AG04450 (cell line): ENCODE measurements at regions of chr20 and their contacts with region 1.

Region 1: DNA sequence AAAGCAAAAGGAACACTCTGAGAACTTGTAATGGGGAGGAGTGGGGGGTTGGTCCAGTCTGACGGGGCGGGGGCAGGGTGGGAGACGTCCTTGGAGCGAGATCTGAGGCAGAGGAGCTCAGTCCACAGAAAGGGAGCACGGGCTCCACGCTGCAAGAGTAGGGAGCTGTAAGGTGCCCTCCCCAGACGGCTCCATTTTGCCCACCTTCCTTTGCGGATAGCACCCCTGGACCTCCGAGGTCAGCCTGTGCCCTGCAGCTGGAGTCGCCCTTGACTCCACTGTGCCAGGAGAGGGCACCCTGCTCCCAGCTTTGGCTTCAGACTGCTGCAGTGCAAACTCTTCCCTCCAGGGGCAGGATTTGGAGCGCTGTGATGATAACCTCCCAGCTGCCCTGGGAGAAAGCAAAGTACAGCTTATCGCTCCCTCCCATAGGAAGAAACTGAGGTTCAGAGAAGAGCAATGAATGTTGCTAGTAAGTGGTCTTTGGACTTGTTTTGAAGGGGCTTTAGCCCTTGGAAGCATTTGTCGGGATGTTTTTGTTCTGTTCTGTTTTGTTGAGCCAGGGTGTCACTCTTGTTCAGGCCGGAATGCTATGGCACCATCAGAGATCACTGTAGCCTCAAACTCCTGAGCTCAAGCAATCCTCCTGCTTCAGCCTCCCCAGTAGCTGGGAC is 9.5 kb upstream of the AHCY start:
- DNase-seq: peak; percentile 69
- H3K4me3 ChIP-seq: peak overlapping the region; percentile 51
- H3K27ac ChIP-seq: no peak overlapping the region
- H3K27me3 ChIP-seq: no peaks in the 10 kb centered on the region
- CTCF ChIP-seq: peak; percentile 100

Region 2: DNA sequence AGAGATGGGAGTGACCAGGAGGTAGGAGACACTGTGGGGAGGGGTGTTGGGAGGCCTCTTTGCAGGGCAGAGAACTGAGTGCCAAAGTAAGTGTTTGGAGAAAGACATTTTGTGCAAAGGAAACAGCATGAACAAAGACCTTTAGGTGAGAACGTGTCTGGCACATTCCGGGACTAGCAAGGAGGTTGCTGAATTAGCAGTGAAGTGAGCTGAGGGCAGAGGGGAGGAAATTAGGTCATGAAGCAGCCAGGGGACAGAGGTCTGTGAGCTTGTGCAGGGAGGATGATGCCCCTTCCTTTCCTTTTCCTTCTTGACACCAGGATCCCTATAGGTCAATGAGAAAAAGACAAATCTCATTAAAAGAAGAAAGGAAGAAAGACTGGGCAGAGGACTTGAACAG is 11.9 kb after region 1 on chr20:
- CTCF ChIA-PET with region 1: interaction called, 29 read pairs
- POLR2A ChIA-PET with region 1: no interaction called
- DNase-seq: no peak
- H3K4me3 ChIP-seq: no peak overlapping the region
- H3K27ac ChIP-seq: no peak overlapping the region
- H3K27me3 ChIP-seq: no peaks in the 10 kb centered on the region
- CTCF ChIP-seq: no peak

Region 3: DNA sequence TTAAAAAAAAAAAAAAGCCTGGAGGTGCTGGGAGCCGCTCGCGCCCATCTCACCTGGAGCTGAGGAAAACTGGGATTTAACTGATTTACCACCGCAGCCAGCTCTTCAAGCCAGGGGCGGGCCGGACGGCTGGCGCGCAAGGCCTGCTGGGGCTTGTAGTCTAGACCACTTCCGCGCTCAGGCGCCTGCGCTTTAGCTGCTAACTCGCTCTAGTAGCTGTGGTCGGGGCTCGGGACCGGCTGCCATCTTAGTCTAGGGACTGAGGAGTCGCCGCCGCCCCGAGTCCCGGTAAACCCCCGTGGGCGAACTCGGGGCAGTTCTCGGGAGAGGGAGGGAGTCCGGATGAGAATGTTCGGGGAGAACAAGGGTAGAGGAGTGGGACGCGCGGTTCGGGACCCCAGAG is 50.4 kb after region 1 on chr20 and contains the start of gene ITCH:
- CTCF ChIA-PET with region 1: interaction called, 20 read pairs
- POLR2A ChIA-PET with region 1: interaction called, 7 read pairs
- DNase-seq: peak; percentile 86
- H3K4me3 ChIP-seq: peak within 1 kb of the TSS; percentile 84
- H3K27ac ChIP-seq: peak within 1 kb of the TSS; percentile 81
- H3K27me3 ChIP-seq: no peaks in the 10 kb centered on the region
- CTCF ChIP-seq: no peak
- polyA plus RNA-seq, gene ITCH: 20.3 and 23.2 TPM in 2 replicates

Region 4: DNA sequence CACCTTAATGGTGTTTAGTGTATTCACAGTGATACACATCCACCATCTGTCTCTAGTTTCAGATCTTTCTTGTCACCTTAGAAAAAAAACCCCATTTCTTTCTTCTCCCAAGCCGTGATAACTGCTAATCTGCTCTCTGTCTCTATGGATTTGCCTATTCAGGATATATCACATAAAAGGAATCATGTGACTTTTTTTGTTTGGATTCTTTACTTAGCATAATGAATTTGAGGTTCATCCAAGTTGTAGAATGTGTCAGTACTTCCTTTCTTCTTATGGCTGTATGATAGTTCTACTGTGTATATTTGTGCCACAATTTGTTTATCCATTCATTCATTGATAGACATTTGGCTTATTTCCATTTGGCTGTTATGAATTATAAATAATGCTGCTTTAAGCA is 107.5 kb after region 1 on chr20:
- CTCF ChIA-PET with region 1: interaction called, 18 read pairs
- POLR2A ChIA-PET with region 1: no interaction called
- DNase-seq: no peak
- H3K4me3 ChIP-seq: no peak overlapping the region
- H3K27ac ChIP-seq: no peak overlapping the region
- H3K27me3 ChIP-seq: no peaks in the 10 kb centered on the region
- CTCF ChIP-seq: no peak

Region 5: DNA sequence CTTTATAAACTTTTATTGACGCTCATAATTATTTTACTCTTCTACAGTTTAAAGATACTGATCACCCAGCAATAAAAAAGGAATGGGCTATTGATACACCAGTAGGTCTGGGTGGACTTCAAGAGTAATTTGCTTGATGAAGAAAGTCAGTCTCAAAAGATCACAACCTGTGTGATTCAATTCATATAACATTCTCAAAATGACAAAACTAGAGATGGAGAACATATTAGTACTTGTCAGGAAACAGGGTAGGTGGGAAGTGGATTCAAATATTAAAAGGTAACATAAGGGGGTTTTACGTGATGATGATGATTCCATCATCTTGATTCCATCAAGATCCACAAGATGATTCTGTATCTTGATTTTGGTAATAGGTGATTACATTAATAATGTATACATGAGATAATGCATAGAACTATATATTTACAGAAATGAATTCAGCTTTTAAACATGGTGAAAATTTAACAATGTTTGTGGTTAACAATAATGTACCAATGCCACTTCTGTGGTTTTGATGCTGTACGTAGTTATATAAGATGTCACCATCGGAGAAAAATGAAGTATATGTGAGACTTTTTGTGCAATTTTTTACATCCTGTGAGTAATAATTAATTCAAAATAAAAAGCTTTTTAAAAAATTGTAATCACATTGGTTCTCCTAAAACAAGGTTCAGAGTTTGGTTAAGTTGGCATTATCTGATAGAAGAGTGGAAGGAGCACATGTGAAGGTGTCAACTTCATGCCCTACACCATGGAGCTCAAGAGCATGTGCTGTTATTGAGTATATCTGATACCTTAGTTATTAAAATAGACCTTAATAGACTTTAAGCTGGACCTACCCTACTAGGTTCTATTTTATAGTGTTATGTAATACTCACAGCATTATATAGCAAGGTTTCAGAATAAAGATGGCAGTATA is 137.3 kb after region 1 on chr20:
- CTCF ChIA-PET with region 1: interaction called, 14 read pairs
- POLR2A ChIA-PET with region 1: no interaction called
- DNase-seq: no peak
- H3K4me3 ChIP-seq: no peak overlapping the region
- H3K27ac ChIP-seq: no peak overlapping the region
- H3K27me3 ChIP-seq: no peaks in the 10 kb centered on the region
- CTCF ChIP-seq: no peak

Region 6: DNA sequence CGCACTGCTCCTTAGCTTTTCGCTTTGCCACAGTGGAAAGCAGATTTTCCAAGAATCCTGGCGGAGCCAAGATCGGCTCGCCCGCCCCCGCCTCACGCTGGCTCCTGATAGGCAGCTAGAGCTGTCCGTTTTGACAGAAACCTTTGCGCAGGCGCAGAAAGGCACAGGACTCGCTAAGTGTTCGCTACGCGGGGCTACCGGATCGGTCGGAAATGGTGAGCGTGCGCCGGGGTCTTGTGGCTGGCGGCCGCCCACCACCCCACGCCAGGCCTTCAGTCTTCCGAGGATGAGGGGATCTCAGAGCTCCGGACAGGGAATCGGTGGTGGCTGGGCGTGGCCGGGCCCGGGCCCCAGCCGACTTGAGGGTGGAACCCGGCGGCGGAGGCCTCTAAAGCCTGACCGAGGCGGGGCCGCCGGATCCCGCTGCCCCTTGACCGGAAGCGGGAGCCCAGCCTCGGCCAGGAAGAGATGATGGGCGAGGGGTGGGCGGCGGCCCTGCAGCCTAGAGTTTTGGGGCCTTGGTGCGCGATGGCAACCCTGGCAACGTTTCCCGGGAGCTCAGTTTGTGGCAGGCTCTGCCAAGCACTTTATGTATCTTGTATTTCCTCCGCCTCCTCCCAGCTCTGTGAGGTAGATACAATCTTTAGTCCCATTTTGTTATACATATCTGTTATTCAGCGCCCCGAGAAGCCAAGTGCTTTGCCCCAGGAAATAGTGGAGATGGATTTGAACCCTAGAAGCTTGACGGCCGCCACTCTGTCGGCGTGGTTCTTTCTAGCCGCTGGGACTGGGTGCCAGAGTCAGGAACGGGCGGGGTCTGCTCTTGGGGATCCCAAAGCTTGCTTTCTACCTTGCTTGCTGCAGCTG is 203.8 kb after region 1 on chr20 and contains the start of gene DYNLRB1:
- CTCF ChIA-PET with region 1: interaction called, 66 read pairs
- POLR2A ChIA-PET with region 1: interaction called, 7 read pairs
- DNase-seq: peak; percentile 94
- H3K4me3 ChIP-seq: peak within 1 kb of the TSS; percentile 82
- H3K27ac ChIP-seq: peak within 1 kb of the TSS; percentile 92
- H3K27me3 ChIP-seq: no peaks in the 10 kb centered on the region
- CTCF ChIP-seq: no peak
- polyA plus RNA-seq, gene DYNLRB1: 256 and 325 TPM in 2 replicates

Region 7: DNA sequence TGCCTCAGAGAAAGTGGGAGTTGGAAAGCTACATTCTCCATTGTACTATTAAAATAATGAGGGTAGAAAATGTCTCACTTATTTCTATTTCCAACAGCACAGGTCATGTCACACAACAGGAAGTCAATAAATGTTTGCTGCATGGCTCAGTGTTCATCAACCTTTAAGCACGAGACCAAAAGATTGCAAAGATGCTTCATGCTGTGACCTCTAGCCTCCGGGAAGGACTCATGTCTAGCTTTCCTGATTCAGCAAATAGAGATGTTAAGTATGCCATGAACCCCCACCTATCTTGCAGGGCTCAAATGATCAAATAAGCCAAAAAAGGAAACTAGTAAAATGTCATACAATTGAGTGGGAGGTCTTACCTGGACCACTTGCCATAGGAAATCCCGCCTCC is 455.4 kb after region 1 on chr20:
- CTCF ChIA-PET with region 1: interaction called, 52 read pairs
- POLR2A ChIA-PET with region 1: interaction called, 3 read pairs
- DNase-seq: peak; percentile 33
- H3K4me3 ChIP-seq: no peak overlapping the region
- H3K27ac ChIP-seq: no peak overlapping the region
- H3K27me3 ChIP-seq: no peaks in the 10 kb centered on the region
- CTCF ChIP-seq: no peak